ENCODE measurements at regions of chr7 and their contacts with region 1.

Region 1: DNA sequence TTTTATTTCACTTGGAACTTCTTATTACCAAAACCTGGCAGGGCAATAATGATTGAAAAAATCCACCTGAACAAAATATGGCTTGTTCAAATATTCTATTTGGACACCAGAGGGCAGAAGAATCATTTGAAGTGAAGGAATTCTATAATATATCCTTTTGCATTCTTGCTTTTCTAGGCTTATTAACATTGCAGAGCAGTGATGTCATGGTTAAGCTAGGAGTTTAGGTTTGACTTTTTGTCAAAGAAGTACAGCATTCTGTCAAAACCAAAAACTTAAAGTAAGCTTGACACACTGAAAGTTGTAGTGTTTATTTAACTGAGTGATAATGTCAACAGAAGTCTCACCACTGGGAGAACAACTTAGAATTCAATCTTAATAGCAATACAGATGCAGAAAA is 156.0 kb downstream of the SEMA3D start:
- DNase-seq: no peak
- ATAC-seq: no peak
- H3K4me3 Mint-ChIP-seq: no peak overlapping the region
- H3K27ac Mint-ChIP-seq: no peak overlapping the region
- H3K4me1 Mint-ChIP-seq: no peaks in the 10 kb centered on the region
- H3K27me3 Mint-ChIP-seq: no peaks in the 10 kb centered on the region
- CTCF ChIP-seq: no peak

Region 2: GRCh38 chr7:85094046-85094725 is 63.3 kb after region 1 on chr7:
- CTCF ChIA-PET with region 1: no interaction called
- POLR2A ChIA-PET with region 1: no interaction called
- intact Hi-C with region 1: loop called (anchors 10 kb)
- DNase-seq: no peak
- ATAC-seq: no peak
- H3K4me3 Mint-ChIP-seq: no peak overlapping the region
- H3K27ac Mint-ChIP-seq: no peak overlapping the region
- H3K4me1 Mint-ChIP-seq: no peaks in the 10 kb centered on the region
- H3K27me3 Mint-ChIP-seq: no peaks in the 10 kb centered on the region
- CTCF ChIP-seq: no peak

Region 3: DNA sequence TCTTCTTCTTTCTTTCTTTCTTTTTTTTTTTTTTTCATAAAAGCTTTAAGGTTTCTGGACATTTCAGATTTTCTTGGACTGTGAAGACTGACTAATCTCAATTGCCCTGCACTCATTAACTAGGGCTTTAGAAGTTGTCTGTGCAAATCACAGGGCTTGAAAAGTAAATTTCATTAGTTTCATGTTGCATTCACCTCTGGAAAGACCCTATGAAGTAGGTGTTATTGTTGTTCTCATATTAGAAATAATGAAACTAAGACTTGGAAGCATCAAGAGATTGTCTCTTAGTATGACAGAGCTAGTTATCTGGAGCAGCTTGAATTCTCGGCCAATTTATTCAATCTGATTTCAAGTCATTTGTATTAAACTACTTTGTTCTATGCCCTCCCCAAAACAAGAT is 184.2 kb after region 1 on chr7:
- CTCF ChIA-PET with region 1: no interaction called
- POLR2A ChIA-PET with region 1: no interaction called
- intact Hi-C with region 1: no loop called
- DNase-seq: no peak
- ATAC-seq: no peak
- H3K4me3 Mint-ChIP-seq: no peak overlapping the region
- H3K27ac Mint-ChIP-seq: no peak overlapping the region
- H3K4me1 Mint-ChIP-seq: no peaks in the 10 kb centered on the region
- H3K27me3 Mint-ChIP-seq: no peaks in the 10 kb centered on the region
- CTCF ChIP-seq: no peak

Region 4: DNA sequence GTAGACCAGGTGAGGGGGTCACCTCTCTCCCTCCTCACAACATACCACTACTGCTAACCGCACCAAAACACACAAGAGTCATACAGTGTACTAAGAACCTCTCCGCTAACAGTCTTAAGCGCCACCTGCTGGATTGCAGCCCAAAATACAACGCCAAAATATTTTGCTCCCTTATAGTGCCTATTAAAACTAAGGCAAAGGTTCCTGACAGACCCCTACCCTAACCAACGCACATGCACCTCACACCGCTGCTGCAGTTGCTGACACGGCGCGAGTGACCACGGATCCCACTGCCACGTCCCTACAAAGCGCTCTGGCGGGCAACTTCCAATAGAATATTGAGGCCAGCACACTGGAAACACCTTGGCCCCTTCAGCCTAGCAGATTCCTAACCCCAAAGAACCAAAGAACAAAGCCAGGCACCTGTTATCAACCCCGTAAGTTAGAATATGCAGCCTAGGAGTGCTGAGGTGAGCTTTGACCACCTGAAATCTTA is 719.6 kb after region 1 on chr7:
- CTCF ChIA-PET with region 1: no interaction called
- POLR2A ChIA-PET with region 1: no interaction called
- intact Hi-C with region 1: loop called (anchors 2 kb)
- DNase-seq: no peak
- ATAC-seq: peak; percentile 25
- H3K4me3 Mint-ChIP-seq: no peak overlapping the region
- H3K27ac Mint-ChIP-seq: no peak overlapping the region
- H3K4me1 Mint-ChIP-seq: no peaks in the 10 kb centered on the region
- H3K27me3 Mint-ChIP-seq: no peaks in the 10 kb centered on the region
- CTCF ChIP-seq: no peak

Measured in activated B cell treated with CpG ODN at 0.5 μM for 24 hours (primary cell).